CD4-positive, alpha-beta T cell (primary cell): ENCODE measurements at regions of chr17 and their contacts with region 1.

Region 1: GRCh38 chr17:48492401-48493298 is 38.2 kb downstream of the HOXB1 start:
- DNase-seq: peak; percentile 28 to 85 (median 66)
- ATAC-seq: peak; percentile 97
- H3K4me3 ChIP-seq: peak overlapping the region; percentile 59
- H3K4me3 Mint-ChIP-seq: peak overlapping the region; percentile 9
- H3K27ac ChIP-seq: no peak overlapping the region
- H3K27ac Mint-ChIP-seq: no peak overlapping the region
- H3K4me1 ChIP-seq: peaks cover 21% of the 10 kb centered on the region
- H3K4me1 Mint-ChIP-seq: peaks cover 3% of the 10 kb centered on the region
- H3K27me3 ChIP-seq: peaks cover 7 to 12% of the 10 kb centered on the region in 2 experiments
- H3K27me3 Mint-ChIP-seq: peaks cover 31% of the 10 kb centered on the region
- CTCF ChIP-seq: peak; percentile 86

Region 2: GRCh38 chr17:48363161-48363560 is 129.5 kb before region 1 on chr17:
- CTCF ChIA-PET with region 1: no interaction called
- POLR2A ChIA-PET with region 1: no interaction called
- intact Hi-C with region 1: no loop called
- DNase-seq: no peak
- ATAC-seq: no peak
- H3K4me3 ChIP-seq: no peak overlapping the region
- H3K4me3 Mint-ChIP-seq: no peak overlapping the region
- H3K27ac ChIP-seq: no peak overlapping the region
- H3K27ac Mint-ChIP-seq: peak overlapping the region; percentile 18
- H3K4me1 ChIP-seq: peaks cover 3% of the 10 kb centered on the region
- H3K4me1 Mint-ChIP-seq: peaks cover 67% of the 10 kb centered on the region
- H3K27me3 ChIP-seq: no peaks in the 10 kb centered on the region
- H3K27me3 Mint-ChIP-seq: no peaks in the 10 kb centered on the region
- CTCF ChIP-seq: no peak

Region 3: DNA sequence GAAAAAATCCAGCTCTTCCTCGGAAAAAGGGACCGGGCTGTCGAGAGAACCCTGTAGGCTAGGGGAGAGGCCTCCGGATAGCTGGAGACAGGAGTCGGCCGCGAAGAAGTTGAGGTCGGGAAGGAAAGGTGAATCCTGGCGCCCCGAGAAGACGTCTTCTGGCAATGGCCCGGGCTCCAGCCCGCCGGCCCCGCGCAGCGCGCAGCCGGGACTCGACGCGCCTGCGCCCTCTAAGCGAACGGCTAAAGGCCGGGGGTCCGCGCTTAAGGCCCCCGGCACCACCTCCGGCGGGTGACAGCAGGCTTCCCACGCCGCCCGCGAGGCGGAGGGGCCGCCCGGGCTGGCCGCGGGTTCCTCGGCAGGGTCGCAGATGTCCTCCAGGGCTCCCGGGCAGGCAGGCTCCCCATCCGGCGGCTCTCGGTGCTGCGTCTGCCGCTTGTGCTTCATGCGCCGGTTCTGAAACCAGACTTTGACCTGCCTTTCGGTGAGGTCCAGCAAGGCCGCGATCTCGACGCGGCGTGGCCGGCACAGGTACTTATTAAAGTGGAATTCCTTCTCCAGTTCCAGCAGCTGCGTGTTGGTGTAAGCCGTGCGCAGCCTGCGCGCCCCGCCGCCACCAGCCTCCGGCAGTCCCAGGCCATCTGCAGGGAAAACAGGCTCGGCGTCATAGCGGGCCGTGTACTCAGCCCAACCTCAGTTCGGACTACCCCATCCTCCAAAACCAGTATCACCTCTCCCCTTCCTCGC is 50.6 kb after region 1 on chr17:
- CTCF ChIA-PET with region 1: interaction called, 8 read pairs
- POLR2A ChIA-PET with region 1: no interaction called
- intact Hi-C with region 1: loop called in 1 of 2 experiments (anchors 5 kb)
- DNase-seq: peak; percentile 18 to 79 (median 50)
- ATAC-seq: peak; percentile 45
- H3K4me3 ChIP-seq: peak overlapping the region; percentile 88
- H3K4me3 Mint-ChIP-seq: peak overlapping the region; percentile 91
- H3K27ac ChIP-seq: peak overlapping the region; percentile 77 to 96
- H3K27ac Mint-ChIP-seq: peak overlapping the region; percentile 90
- H3K4me1 ChIP-seq: peaks cover 70% of the 10 kb centered on the region
- H3K4me1 Mint-ChIP-seq: peaks cover 54% of the 10 kb centered on the region
- H3K27me3 ChIP-seq: no peaks in the 10 kb centered on the region
- H3K27me3 Mint-ChIP-seq: peaks cover 80% of the 10 kb centered on the region
- CTCF ChIP-seq: no peak

Region 4: GRCh38 chr17:48587276-48588073 is 94.8 kb after region 1 on chr17:
- CTCF ChIA-PET with region 1: interaction called, 13 read pairs
- POLR2A ChIA-PET with region 1: no interaction called
- intact Hi-C with region 1: loop called (anchors 2 to 5 kb)
- DNase-seq: no peak
- ATAC-seq: no peak
- H3K4me3 ChIP-seq: no peak overlapping the region
- H3K4me3 Mint-ChIP-seq: peak overlapping the region; percentile 27
- H3K27ac ChIP-seq: no peak overlapping the region
- H3K27ac Mint-ChIP-seq: no peak overlapping the region
- H3K4me1 ChIP-seq: peaks cover 31% of the 10 kb centered on the region
- H3K4me1 Mint-ChIP-seq: peaks cover 27% of the 10 kb centered on the region
- H3K27me3 ChIP-seq: peaks cover 70 to 87% of the 10 kb centered on the region in 2 experiments
- H3K27me3 Mint-ChIP-seq: peaks cover 100% of the 10 kb centered on the region
- CTCF ChIP-seq: no peak

Region 5: DNA sequence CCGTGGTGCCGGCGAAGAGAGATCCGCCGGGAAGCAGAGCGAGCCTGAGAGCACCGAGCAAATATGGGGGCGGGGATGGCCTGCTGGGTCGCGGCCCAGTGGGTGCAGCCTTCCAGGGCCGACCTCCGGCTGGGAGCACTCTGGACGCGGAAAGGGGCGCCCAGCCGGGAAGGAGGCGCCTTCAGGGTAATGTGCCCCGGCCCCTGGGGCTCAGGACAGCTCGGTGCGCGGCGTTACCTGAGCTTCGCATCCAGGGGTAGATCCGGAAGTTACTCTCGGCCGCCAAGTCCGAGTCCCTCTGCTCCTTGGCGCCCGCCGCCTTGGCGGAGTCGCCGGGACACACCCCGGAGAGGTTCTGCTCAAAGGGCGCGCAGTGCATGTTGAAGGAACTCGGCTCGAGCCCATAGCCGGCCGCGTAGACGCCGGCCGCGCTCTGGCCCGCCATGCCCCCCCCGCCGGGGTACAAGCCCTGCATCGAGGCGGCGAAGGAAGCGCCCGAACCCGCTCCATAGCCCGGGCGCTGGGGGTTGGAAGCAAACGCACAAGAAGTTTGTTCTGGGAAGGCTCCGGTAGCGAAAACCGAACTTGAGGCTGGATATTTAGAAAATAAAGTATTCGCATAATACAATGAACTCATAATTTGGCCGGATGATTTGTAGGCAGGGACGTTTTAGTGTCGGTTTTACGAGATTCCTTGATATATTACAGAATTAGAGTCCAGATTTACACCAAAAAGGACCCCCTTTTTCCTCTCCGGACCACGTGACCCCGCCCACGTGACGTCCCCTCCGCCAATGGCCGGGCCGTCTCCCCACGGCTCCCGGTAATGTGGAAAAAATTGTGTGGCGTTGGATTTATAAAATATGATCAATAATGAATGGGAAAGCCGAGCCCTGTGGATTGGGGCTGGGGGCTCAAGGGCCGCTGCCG is 117.9 kb after region 1 on chr17 and contains the start of gene HOXB7:
- CTCF ChIA-PET with region 1: no interaction called
- POLR2A ChIA-PET with region 1: no interaction called
- intact Hi-C with region 1: no loop called
- DNase-seq: peak in 7 of 14 experiments; percentile 36 to 70 (median 60)
- ATAC-seq: peak; percentile 18
- H3K4me3 ChIP-seq: peak within 1 kb of the TSS; percentile 71
- H3K4me3 Mint-ChIP-seq: peak within 1 kb of the TSS; percentile 89
- H3K27ac ChIP-seq: no peak within 1 kb of the TSS
- H3K27ac Mint-ChIP-seq: no peak within 1 kb of the TSS
- H3K4me1 ChIP-seq: peaks cover 57% of the 10 kb centered on the region
- H3K4me1 Mint-ChIP-seq: peaks cover 51% of the 10 kb centered on the region
- H3K27me3 ChIP-seq: peaks cover 75 to 80% of the 10 kb centered on the region in 2 experiments
- H3K27me3 Mint-ChIP-seq: peaks cover 89% of the 10 kb centered on the region
- CTCF ChIP-seq: no peak
- total RNA-seq, gene HOXB7: not detected